ENCODE measurements at regions of chr3 and their contacts with region 1.

Region 1: DNA sequence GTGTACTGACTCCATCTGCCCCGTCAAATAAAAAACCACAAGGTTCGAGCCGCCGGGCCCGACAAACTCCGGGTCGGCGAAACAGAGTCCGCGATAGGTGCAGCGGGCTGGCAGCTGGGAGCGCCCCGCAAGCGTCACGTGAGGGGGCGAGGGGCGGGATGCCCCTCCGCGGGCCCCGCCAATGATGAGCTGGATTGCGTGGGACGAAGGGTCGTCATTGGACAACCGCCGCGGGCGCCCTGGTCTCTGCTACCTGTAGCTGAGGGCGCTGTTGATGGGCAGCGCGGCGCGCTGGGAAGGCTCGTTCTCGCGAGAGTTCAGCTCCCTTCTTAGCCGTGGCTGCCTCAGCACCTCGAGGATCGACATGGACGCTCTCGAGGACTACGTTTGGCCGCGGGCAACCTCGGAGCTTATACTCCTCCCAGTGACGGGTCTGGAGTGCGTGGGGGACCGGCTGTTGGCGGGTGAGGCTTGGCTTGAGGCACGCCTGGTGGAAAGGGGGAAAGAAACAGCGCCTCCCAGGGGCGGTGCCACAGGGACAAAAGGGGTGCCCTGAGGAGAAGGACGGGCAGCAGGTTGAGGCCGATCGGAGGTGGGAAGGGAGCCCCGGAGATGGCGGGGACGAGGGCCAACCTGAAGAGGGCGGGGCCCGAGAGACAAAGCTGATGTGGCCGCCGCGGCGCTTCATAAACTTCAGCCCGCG is at the start of gene WDR6:
- DNase-seq: peak; percentile 96
- H3K4me3 Mint-ChIP-seq: peak within 1 kb of the TSS; percentile 98
- H3K27ac Mint-ChIP-seq: peak within 1 kb of the TSS; percentile 100
- H3K4me1 Mint-ChIP-seq: peaks cover 29% of the 10 kb centered on the region
- H3K27me3 Mint-ChIP-seq: no peaks in the 10 kb centered on the region
- total RNA-seq, gene WDR6: 143 and 145 TPM in 2 replicates

Region 2: DNA sequence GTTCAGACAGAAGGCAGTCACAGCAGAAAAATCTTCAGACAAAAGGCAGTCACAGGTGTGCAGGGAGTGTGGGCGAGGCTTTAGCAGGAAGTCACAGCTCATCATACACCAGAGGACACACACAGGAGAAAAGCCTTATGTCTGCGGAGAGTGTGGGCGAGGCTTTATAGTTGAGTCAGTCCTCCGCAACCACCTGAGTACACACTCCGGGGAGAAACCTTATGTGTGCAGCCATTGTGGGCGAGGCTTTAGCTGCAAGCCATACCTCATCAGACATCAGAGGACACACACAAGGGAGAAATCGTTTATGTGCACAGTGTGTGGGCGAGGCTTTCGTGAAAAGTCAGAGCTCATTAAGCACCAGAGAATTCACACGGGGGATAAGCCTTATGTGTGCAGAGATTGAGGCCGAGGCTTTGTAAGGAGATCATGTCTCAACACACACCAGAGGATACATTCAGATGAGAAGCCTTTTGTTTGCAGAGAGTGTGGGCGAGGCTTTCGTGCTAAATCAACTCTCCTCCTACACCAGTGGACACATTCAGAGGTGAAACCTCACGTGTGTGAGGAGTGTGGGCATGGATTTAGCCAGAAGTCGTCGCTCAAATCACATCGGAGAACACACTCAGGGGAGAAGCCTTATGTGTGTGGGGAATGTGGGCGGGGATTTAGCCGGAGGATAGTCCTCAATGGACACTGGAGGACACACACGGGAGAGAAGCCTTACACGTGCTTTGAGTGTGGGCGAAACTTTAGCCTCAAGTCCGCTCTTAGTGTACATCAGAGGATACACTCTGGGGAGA is 738.6 kb before region 1 on chr3:
- intact Hi-C with region 1: loop called (anchors 2 kb)
- DNase-seq: peak; percentile 74
- H3K4me3 Mint-ChIP-seq: peak overlapping the region; percentile 63
- H3K27ac Mint-ChIP-seq: peak overlapping the region; percentile 97
- H3K4me1 Mint-ChIP-seq: peaks cover 51% of the 10 kb centered on the region
- H3K27me3 Mint-ChIP-seq: no peaks in the 10 kb centered on the region

Region 3: DNA sequence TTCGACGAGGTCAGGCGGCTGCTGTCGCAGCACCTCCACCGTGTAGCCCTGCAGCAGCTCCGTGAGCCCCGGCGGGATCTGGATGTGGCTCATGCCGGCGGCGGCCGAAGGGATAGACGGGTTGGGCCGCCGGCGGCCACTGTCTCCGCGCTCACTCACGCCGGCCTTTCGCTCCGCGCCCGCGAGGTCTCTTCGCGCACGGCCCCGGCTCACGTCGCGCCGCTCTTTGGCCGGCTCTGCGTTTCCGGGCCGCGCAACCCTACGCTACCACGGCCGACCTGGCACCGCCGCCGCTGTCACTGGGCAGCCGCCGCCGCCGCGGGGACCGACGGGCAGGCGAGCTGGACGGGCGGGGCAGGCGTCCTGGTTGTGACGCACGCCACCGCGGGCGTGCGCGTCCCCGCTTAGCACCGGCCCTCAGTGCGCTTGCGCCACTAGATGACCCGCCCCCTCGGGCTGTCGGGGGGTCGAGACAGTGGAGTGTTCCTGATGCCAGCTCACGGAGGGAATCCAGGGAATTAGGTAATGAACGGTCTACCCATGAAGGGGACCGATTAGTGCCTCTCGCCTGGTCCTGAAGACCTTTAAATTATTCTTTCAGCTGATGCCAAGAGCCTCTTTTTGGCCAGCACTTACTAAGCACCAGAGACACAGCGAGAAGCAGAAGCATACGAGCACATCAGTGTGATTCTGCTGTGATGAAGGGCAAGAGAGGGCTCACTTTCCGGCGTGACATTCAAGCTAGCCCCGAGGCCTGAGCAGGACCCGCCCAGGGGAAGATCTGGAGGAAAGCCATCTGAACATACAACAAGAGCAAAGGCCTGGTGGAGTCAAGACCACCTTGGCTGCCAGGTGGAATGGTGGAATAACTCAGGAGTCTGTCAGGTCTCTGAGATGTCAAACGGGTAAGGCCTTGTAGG is 159.5 kb before region 1 on chr3 and contains the start of gene PRKAR2A:
- intact Hi-C with region 1: loop called (anchors 1 kb)
- DNase-seq: peak; percentile 79
- H3K4me3 Mint-ChIP-seq: peak within 1 kb of the TSS; percentile 87
- H3K27ac Mint-ChIP-seq: peak within 1 kb of the TSS; percentile 71
- H3K4me1 Mint-ChIP-seq: peaks cover 22% of the 10 kb centered on the region
- H3K27me3 Mint-ChIP-seq: no peaks in the 10 kb centered on the region
- total RNA-seq, gene PRKAR2A: 34.7 and 38.8 TPM in 2 replicates

Region 4: DNA sequence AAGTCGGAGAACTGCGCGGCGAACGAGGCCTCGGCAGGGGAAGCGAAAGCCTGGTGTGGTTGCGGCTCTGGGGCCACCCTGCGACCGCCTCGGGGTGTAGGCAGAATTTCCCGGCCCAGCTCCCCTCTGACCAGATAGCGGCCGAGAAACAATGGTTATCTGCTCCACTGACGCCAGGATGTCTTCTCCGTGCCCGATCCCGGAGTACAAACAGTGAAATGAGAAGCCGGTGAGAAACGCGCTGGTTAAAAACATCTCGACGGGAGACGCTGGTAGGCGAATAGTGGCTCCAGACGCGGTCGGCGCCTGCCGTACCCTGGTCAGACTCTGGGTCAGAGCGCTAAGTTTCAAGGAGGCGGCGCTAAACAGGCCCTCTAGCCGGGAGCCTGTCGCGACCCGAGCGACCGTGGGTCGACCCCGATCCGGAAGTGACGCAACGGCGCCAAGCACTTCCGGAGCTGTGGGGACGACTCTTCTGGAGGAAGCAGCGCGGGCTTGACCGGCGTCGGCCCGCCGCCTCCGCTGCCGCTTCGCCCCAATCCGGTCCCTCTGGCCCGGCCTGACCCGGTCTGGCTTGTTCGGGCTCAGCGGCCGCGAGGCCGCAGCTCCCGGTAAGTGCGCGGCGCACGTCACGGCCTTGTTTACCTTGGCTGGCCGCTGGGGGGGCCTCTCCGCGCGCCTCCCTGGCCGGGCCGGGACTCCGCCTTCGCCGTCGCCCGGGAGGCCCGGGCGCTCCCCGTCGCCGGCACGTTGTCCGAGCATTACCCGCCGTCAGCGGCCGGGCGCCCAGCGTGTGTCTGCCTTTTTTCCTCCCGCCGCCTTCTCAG is 88.6 kb before region 1 on chr3 and contains the start of gene ARIH2:
- intact Hi-C with region 1: loop called (anchors 1 kb)
- DNase-seq: peak; percentile 87
- H3K4me3 Mint-ChIP-seq: peak within 1 kb of the TSS; percentile 92
- H3K27ac Mint-ChIP-seq: peak within 1 kb of the TSS; percentile 97
- H3K4me1 Mint-ChIP-seq: peaks cover 14% of the 10 kb centered on the region
- H3K27me3 Mint-ChIP-seq: no peaks in the 10 kb centered on the region
- total RNA-seq, gene ARIH2: 179 and 180 TPM in 2 replicates

Region 5: DNA sequence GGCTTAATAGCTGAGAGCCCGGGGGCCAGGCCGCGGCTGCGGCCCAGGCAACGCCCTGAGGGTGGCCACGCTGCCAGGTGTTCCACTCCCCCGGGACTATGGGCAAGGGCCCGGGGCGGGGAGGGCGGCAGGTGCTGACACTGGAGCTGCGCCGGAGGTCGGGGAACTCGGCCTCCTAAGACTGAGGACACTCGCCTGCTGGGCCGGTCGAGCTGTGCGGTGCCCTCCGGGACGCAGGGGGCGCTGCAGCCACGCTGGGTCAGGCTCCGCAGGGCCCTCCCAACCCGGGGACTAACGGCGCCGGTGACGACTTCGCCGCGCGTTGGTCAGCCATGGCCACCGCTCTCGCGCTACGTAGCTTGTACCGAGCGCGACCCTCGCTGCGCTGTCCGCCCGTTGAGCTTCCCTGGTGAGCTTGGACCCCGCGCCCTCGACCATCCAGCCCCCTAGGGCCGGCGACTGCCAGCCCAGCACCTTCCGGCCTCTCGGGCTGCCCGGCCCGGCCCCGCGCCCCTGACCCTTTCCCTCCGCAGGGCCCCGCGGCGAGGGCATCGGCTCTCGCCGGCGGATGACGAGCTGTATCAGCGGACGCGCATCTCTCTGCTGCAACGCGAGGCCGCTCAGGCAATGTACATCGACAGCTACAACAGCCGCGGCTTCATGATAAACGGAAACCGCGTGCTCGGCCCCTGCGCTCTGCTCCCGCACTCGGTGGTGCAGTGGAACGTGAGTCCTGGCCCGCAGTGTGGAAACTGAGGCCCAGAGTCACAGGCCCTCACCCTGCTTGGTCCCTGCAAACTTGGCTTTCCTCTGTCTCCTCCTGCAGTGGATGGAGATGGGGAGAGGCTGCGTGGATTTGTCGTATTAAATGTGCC is 14.8 kb after region 1 on chr3 and contains the start of gene NDUFAF3:
- intact Hi-C with region 1: loop called (anchors 1 kb)
- DNase-seq: peak; percentile 91
- H3K4me3 Mint-ChIP-seq: peak within 1 kb of the TSS; percentile 91
- H3K27ac Mint-ChIP-seq: peak within 1 kb of the TSS; percentile 99
- H3K4me1 Mint-ChIP-seq: peaks cover 41% of the 10 kb centered on the region
- H3K27me3 Mint-ChIP-seq: no peaks in the 10 kb centered on the region
- total RNA-seq, gene NDUFAF3: 126 and 129 TPM in 2 replicates

Region 6: DNA sequence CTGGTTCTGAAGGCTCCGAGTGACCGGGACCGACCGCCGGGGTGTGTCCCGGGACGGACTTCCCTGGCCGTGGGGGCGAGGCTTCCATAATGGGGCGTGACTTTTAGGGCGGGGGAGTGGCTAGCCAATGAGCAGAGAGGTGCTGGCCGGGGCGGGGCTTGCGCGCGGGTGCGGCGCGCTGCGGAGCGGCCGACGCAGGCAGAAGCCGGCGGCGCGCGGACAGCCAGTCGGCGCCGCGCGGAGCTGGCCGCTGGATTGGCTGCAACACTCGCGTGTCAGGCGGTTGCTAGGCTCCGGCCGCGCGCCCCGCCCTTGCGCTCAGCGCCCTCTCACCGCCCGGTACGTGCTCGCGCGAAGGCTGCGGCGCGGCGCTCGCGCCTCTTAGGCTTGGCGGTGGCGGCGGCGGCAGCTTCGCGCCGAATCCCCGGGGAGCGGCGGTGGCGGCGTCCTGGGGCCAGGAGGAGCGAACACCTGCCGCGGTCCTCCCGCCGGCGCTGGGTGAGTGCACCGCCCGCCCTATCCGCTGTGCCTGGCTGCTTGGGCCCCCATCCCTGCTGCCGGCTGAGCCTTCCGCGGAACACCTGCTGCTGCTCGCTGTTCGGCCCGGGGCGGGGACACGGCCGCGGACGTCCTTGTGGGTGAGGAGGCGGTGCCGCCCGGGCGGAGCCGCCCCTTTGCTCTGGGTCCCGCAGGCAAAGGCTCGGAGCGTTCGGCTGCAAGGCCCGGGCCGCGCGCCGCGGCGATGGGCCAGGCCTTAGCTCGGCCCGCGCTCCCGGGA is 462.9 kb after region 1 on chr3 and contains the start of gene DAG1:
- intact Hi-C with region 1: loop called (anchors 1 kb)
- DNase-seq: peak; percentile 96
- H3K4me3 Mint-ChIP-seq: peak within 1 kb of the TSS; percentile 92
- H3K27ac Mint-ChIP-seq: peak within 1 kb of the TSS; percentile 88
- H3K4me1 Mint-ChIP-seq: peaks cover 23% of the 10 kb centered on the region
- H3K27me3 Mint-ChIP-seq: no peaks in the 10 kb centered on the region
- total RNA-seq, gene DAG1: 20.5 and 23.7 TPM in 2 replicates